A673 (cell line): ENCODE measurements at regions of chr3 and their contacts with region 1.

Region 1: GRCh38 chr3:105366326-105367062 is at the start of gene ALCAM:
- DNase-seq: peak; percentile 99
- H3K4me3 ChIP-seq: peak within 1 kb of the TSS; percentile 76
- H3K27ac ChIP-seq: peak within 1 kb of the TSS; percentile 66
- H3K4me1 ChIP-seq: peaks cover 17% of the 10 kb centered on the region
- H3K27me3 ChIP-seq: no peaks in the 10 kb centered on the region
- CTCF ChIP-seq: peak; percentile 82
- total RNA-seq, gene ALCAM: 36.8 and 45.2 TPM in 2 replicates

Region 2: GRCh38 chr3:104102386-104102785 is 1264.1 kb before region 1 on chr3:
- CTCF ChIA-PET with region 1: no interaction called
- POLR2A ChIA-PET with region 1: no interaction called
- intact Hi-C with region 1: loop called (anchors 10 kb)
- DNase-seq: peak; percentile 80
- H3K4me3 ChIP-seq: no peak overlapping the region
- H3K27ac ChIP-seq: no peak overlapping the region
- H3K4me1 ChIP-seq: no peaks in the 10 kb centered on the region
- H3K27me3 ChIP-seq: no peaks in the 10 kb centered on the region
- CTCF ChIP-seq: peak; percentile 77

Region 3: DNA sequence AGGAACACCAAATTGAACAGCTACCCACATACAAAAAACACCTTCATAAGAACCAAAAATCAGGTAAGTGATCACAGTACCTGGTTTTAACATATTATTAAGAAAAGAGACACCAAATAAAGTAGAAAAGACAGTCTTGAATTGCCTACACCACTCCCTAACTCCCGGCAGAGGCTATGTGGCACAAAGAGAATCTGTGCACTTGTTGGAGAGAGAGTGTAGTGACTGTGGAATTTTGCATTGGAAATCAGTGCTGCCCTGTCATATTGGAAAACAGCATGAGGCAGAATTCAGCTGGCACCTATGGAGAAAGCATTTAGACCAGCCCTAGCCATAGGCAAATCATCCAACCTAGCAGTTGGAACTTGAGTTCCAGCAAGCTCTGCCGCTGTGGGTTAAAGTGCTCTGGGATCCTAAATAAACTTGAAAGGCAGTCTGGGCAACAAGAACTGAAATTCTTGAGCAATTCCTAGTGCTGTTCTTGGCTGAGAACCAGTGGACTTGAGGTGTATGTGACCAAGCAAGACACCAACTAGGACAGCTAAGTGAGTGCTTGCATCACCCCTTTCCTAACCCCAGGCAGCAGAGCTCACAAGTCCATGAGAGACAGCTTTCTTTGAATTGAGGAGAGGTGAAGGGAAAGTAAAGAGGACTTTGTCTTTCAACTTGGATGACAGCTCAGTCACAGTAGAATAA is 969.4 kb before region 1 on chr3:
- CTCF ChIA-PET with region 1: no interaction called
- POLR2A ChIA-PET with region 1: no interaction called
- intact Hi-C with region 1: no loop called
- DNase-seq: no peak
- H3K4me3 ChIP-seq: no peak overlapping the region
- H3K27ac ChIP-seq: no peak overlapping the region
- H3K4me1 ChIP-seq: no peaks in the 10 kb centered on the region
- H3K27me3 ChIP-seq: no peaks in the 10 kb centered on the region
- CTCF ChIP-seq: no peak

Region 4: GRCh38 chr3:104460477-104461406 is 905.8 kb before region 1 on chr3:
- CTCF ChIA-PET with region 1: no interaction called
- POLR2A ChIA-PET with region 1: no interaction called
- intact Hi-C with region 1: loop called (anchors 5 kb)
- DNase-seq: peak; percentile 62
- H3K4me3 ChIP-seq: no peak overlapping the region
- H3K27ac ChIP-seq: no peak overlapping the region
- H3K4me1 ChIP-seq: no peaks in the 10 kb centered on the region
- H3K27me3 ChIP-seq: no peaks in the 10 kb centered on the region
- CTCF ChIP-seq: peak; percentile 61

Region 5: DNA sequence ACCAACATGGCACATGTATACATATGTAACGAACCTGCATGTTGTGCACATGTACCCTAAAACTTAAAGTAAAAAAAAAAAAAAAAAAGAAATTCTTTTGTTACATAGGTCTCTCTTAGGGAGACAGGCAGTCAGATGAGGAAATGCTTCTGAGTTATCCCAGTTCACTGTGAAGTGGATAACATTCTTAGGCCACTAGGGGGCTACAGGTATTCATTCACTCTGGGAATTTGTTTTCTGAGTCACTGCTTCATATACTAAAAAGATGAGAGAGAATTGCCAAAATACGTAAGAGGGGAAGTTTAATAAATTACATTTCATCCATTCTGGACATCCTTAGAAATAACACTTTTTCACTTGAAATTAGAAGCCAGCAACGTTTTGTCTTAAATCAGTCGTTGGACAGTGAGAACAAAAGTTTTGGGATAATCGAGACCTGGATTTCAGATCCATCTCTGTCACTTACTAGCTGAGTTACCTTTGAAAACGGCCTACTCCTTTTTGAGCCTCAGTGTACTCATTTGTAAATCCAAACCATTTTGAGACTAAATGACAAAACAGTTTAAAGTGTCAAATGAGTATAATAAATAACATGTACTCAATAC is 738.2 kb before region 1 on chr3:
- CTCF ChIA-PET with region 1: no interaction called
- POLR2A ChIA-PET with region 1: no interaction called
- intact Hi-C with region 1: loop called (anchors 5 kb)
- DNase-seq: peak; percentile 74
- H3K4me3 ChIP-seq: no peak overlapping the region
- H3K27ac ChIP-seq: no peak overlapping the region
- H3K4me1 ChIP-seq: peaks cover 4% of the 10 kb centered on the region
- H3K27me3 ChIP-seq: no peaks in the 10 kb centered on the region
- CTCF ChIP-seq: peak; percentile 74

Region 6: GRCh38 chr3:104987859-104988258 is 378.6 kb before region 1 on chr3:
- CTCF ChIA-PET with region 1: no interaction called
- POLR2A ChIA-PET with region 1: no interaction called
- intact Hi-C with region 1: loop called (anchors 10 kb)
- DNase-seq: peak; percentile 11
- H3K4me3 ChIP-seq: no peak overlapping the region
- H3K27ac ChIP-seq: no peak overlapping the region
- H3K4me1 ChIP-seq: no peaks in the 10 kb centered on the region
- H3K27me3 ChIP-seq: no peaks in the 10 kb centered on the region
- CTCF ChIP-seq: peak; percentile 41; the same call in 1 of the 2 replicates

Region 7: GRCh38 chr3:105394177-105394576 is 27.7 kb after region 1 on chr3:
- CTCF ChIA-PET with region 1: no interaction called
- POLR2A ChIA-PET with region 1: no interaction called
- intact Hi-C with region 1: no loop called
- DNase-seq: peak; percentile 30
- H3K4me3 ChIP-seq: no peak overlapping the region
- H3K27ac ChIP-seq: no peak overlapping the region
- H3K4me1 ChIP-seq: no peaks in the 10 kb centered on the region
- H3K27me3 ChIP-seq: no peaks in the 10 kb centered on the region
- CTCF ChIP-seq: no peak

Region 8: DNA sequence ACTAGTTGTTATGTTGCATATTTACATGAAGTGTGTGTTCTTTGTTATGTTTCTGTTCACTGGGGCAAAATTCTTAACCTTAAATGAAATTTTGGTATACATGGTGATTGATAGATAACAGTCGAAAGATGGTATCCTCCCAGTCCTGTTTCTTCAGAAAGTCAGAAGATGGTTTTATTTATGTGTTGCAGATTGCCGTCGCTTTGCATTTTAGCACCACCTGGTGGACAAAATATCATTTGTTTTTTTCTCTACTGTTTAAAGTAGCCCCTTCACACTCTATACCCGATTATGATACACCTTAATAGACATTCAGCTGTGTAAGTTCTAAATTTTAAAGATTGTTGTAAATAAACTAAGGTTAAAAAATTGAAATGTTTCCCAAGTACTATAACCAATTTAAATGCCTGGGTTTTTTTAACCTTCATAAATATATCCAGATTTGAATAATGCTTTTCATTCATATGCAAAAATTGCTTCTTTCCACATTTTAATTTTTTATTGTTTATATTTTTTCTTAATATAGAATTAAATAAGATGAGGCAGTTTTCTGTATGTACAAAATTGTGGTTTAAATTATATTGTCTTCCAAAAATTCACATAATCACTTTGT is 152.4 kb after region 1 on chr3:
- CTCF ChIA-PET with region 1: no interaction called
- POLR2A ChIA-PET with region 1: no interaction called
- intact Hi-C with region 1: loop called (anchors 1 kb)
- DNase-seq: peak; percentile 83
- H3K4me3 ChIP-seq: no peak overlapping the region
- H3K27ac ChIP-seq: no peak overlapping the region
- H3K4me1 ChIP-seq: no peaks in the 10 kb centered on the region
- H3K27me3 ChIP-seq: no peaks in the 10 kb centered on the region
- CTCF ChIP-seq: peak; percentile 68

Region 9: GRCh38 chr3:106850437-106850836 is 1483.9 kb after region 1 on chr3:
- CTCF ChIA-PET with region 1: no interaction called
- POLR2A ChIA-PET with region 1: no interaction called
- intact Hi-C with region 1: no loop called
- DNase-seq: no peak
- H3K4me3 ChIP-seq: no peak overlapping the region
- H3K27ac ChIP-seq: no peak overlapping the region
- H3K4me1 ChIP-seq: peaks cover 3% of the 10 kb centered on the region
- H3K27me3 ChIP-seq: no peaks in the 10 kb centered on the region
- CTCF ChIP-seq: no peak

Region 10: DNA sequence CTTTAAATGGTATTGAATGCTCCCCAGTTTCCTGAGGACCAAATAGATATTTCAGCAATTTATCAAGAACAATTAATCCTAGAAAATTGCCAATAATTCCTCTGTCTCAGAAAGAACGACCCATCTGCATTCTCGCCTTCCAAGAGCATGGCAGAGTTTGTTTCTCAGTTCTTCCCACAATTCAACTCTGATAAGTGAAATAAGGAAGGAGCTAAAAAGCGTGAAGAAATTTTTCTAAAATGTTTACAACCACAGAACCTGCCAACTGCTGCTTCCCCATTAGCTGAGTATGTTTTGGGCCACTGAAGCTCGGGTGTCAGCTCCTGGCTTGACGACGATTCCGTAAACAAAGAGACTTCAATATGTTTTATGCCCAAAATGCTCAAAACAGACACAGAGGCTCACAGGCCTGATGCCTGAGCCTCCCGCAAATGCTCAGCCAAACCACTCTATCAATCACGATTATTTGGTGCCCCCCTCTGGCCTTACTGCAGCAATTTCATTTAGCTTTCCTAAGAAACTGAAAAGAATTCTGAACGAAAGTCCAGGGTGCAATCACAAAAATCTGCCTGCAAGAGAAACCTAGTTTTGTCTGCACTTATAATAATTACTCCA is 1751.5 kb after region 1 on chr3:
- CTCF ChIA-PET with region 1: no interaction called
- POLR2A ChIA-PET with region 1: interaction called, 3 read pairs
- intact Hi-C with region 1: loop called (anchors 10 kb)
- DNase-seq: peak; percentile 93
- H3K4me3 ChIP-seq: no peak overlapping the region
- H3K27ac ChIP-seq: peak overlapping the region; percentile 59
- H3K4me1 ChIP-seq: peaks cover 17% of the 10 kb centered on the region
- H3K27me3 ChIP-seq: no peaks in the 10 kb centered on the region
- CTCF ChIP-seq: peak; percentile 86